CD4-positive, alpha-beta T cell (primary cell): ENCODE measurements at regions of chr10 and their contacts with region 1.

Region 1: GRCh38 chr10:132396495-132397035 is 435 bp upstream of the PWWP2B start:
- DNase-seq: peak; percentile 45 to 89 (median 66)
- ATAC-seq: peak; percentile 77
- H3K4me3 ChIP-seq: peak overlapping the region; percentile 38
- H3K4me3 Mint-ChIP-seq: no peak overlapping the region
- H3K27ac ChIP-seq: no peak overlapping the region
- H3K27ac Mint-ChIP-seq: no peak overlapping the region
- H3K4me1 ChIP-seq: peaks cover 41% of the 10 kb centered on the region
- H3K4me1 Mint-ChIP-seq: peaks cover 24% of the 10 kb centered on the region
- H3K27me3 ChIP-seq: no peaks in the 10 kb centered on the region
- H3K27me3 Mint-ChIP-seq: no peaks in the 10 kb centered on the region
- CTCF ChIP-seq: no peak

Region 2: DNA sequence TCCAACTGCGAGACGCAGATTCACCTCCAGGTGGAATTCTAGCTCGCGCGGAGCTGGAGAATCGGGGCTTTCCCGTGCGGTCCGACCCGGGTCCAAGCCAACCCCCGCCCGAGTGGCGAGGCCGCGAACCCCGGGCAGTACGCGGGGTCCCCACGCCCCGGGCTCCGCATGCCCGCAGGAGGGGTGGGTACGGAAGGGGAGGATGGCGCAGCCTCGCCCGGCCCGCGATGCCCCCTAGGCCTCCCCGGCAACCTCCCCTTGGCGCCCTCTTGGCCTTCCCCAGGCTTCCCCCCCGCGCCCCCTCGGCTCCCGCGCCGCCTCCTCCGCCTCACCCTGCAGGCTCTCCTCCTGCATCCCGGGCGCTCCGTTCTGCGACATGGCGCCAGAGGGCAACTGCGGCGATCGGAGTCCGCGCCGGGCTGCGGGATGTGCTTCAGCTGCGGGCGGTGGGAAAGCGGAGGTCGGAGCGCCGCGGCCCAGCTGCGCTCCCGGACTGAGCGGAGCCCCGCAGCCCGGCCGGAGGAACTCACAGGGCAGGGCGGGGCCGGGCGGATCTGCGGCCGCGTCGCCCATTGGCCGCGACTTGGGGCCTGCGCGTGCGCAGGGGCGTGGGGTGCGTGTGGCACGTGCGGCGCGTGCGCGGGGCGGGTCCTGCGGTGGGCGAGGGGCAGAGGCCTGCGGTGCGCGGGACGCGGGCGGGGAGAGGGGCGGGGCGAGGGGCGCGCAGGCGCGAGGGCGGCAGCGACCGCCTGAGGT is 415.0 kb before region 1 on chr10 and contains the start of gene BNIP3:
- CTCF ChIA-PET with region 1: no interaction called
- POLR2A ChIA-PET with region 1: no interaction called
- intact Hi-C with region 1: loop called in 1 of 2 experiments (anchors 10 kb)
- DNase-seq: peak; percentile 87 to 98 (median 94)
- ATAC-seq: peak; percentile 87
- H3K4me3 ChIP-seq: peak within 1 kb of the TSS; percentile 80
- H3K4me3 Mint-ChIP-seq: peak within 1 kb of the TSS; percentile 90
- H3K27ac ChIP-seq: peak within 1 kb of the TSS; percentile 16 to 55
- H3K27ac Mint-ChIP-seq: peak within 1 kb of the TSS; percentile 81
- H3K4me1 ChIP-seq: peaks cover 53% of the 10 kb centered on the region
- H3K4me1 Mint-ChIP-seq: peaks cover 47% of the 10 kb centered on the region
- H3K27me3 ChIP-seq: no peaks in the 10 kb centered on the region
- H3K27me3 Mint-ChIP-seq: no peaks in the 10 kb centered on the region
- CTCF ChIP-seq: no peak
- total RNA-seq, gene BNIP3: 21.0 to 23.6 TPM

Region 3: GRCh38 chr10:132422903-132423815 is 26.6 kb after region 1 on chr10:
- CTCF ChIA-PET with region 1: no interaction called
- POLR2A ChIA-PET with region 1: no interaction called
- intact Hi-C with region 1: no loop called
- DNase-seq: peak in 2 of 14 experiments; percentile 52 to 57
- ATAC-seq: peak; percentile 43
- H3K4me3 ChIP-seq: no peak overlapping the region
- H3K4me3 Mint-ChIP-seq: no peak overlapping the region
- H3K27ac ChIP-seq: no peak overlapping the region
- H3K27ac Mint-ChIP-seq: peak overlapping the region; percentile 76
- H3K4me1 ChIP-seq: peaks cover 42% of the 10 kb centered on the region
- H3K4me1 Mint-ChIP-seq: peaks cover 23% of the 10 kb centered on the region
- H3K27me3 ChIP-seq: no peaks in the 10 kb centered on the region
- H3K27me3 Mint-ChIP-seq: no peaks in the 10 kb centered on the region
- CTCF ChIP-seq: no peak

Region 4: DNA sequence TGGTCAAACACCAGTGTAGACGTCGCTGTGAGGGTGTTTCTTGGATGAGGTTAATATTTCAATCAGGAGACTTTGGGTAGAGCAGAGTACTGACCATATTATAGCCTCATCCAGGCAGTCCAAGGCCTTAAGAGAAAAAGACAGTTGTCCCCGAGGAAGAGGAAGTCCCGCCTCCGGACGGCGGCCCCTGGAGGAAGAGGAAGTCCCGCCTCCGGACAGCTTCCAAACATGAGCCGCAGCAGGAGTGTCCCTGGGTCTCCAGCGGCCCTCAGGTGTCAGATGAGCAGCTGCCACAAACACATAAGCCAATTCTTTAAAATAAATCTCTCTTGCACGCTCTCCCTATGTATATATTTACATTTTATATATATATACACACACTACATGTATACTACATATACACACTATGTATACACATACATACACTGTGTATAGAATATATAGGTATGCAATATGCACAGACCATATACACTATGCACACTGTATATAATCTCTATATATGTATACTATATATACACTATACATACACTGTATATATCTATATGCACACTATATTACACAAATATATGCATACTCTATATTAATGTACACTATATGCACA is 37.9 kb after region 1 on chr10:
- CTCF ChIA-PET with region 1: no interaction called
- POLR2A ChIA-PET with region 1: no interaction called
- intact Hi-C with region 1: no loop called
- DNase-seq: peak in 11 of 14 experiments; percentile 30 to 79 (median 57)
- ATAC-seq: peak; percentile 58
- H3K4me3 ChIP-seq: no peak overlapping the region
- H3K4me3 Mint-ChIP-seq: peak overlapping the region; percentile 35
- H3K27ac ChIP-seq: no peak overlapping the region
- H3K27ac Mint-ChIP-seq: no peak overlapping the region
- H3K4me1 ChIP-seq: peaks cover 11% of the 10 kb centered on the region
- H3K4me1 Mint-ChIP-seq: peaks cover 11% of the 10 kb centered on the region
- H3K27me3 ChIP-seq: no peaks in the 10 kb centered on the region
- H3K27me3 Mint-ChIP-seq: no peaks in the 10 kb centered on the region
- CTCF ChIP-seq: no peak

Region 5: GRCh38 chr10:132446661-132447194 is 50.2 kb after region 1 on chr10:
- CTCF ChIA-PET with region 1: interaction called, 4 read pairs
- POLR2A ChIA-PET with region 1: interaction called, 25 read pairs
- intact Hi-C with region 1: loop called in 1 of 2 experiments (anchors 1 kb)
- DNase-seq: peak; percentile 43 to 88 (median 62)
- ATAC-seq: peak; percentile 49
- H3K4me3 ChIP-seq: peak overlapping the region; percentile 50
- H3K4me3 Mint-ChIP-seq: peak overlapping the region; percentile 78
- H3K27ac ChIP-seq: peak overlapping the region; percentile 97
- H3K27ac Mint-ChIP-seq: peak overlapping the region; percentile 94
- H3K4me1 ChIP-seq: peaks cover 65% of the 10 kb centered on the region
- H3K4me1 Mint-ChIP-seq: peaks cover 62% of the 10 kb centered on the region
- H3K27me3 ChIP-seq: no peaks in the 10 kb centered on the region
- H3K27me3 Mint-ChIP-seq: no peaks in the 10 kb centered on the region
- CTCF ChIP-seq: peak; percentile 67